Right cardiac atrium (tissue), 5 donors: ENCODE measurements at regions of chr10 and their contacts with region 1.

Region 1: DNA sequence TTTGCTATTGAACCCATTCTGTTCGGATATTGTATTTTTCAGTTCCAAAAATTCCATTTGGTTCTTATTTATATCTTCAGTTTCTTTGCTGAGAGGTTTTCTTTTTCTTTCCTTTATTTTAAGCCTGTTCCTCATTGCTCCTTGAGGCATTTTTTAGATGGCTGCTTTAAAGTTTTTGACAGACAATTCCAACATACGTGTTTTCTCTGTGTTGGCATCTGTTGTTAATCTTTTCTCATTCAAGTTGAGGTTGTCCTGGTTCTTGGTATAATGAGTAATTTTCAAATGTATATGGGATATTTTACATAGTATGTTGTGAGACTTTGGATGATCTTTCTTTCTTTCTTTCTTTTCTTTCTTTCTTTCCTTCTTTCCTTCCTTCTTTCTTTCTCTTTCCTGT is 1078.0 kb upstream of the CELF2 start:
- DNase-seq: no peak
- ATAC-seq: no peak
- H3K4me3 ChIP-seq: no peak overlapping the region
- H3K27ac ChIP-seq: no peak overlapping the region
- H3K4me1 ChIP-seq: no peaks in the 10 kb centered on the region
- H3K27me3 ChIP-seq: no peaks in the 10 kb centered on the region

Region 2: DNA sequence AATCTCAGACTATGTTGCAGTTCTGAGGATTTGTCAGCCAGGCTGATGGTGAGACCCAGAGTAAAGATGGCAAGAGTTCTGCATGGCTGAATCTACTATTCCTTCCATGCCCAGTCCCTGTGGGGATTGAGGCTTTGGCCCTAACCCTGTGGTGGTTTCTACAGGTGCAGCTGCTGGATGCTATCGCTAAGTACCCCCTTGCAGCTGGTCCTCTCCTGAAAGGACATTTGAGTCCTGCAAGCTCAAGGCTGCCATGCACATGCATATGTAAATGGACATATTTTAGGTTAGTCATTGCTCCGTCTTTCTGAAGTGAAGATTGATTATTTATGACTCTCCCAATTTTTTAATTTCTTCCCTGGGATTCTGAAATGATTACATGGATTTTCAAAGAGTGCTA is 44.3 kb before region 1 on chr10:
- intact Hi-C with region 1: no loop called
- DNase-seq: no peak
- ATAC-seq: no peak
- H3K4me3 ChIP-seq: no peak overlapping the region
- H3K27ac ChIP-seq: no peak overlapping the region
- H3K4me1 ChIP-seq: no peaks in the 10 kb centered on the region
- H3K27me3 ChIP-seq: no peaks in the 10 kb centered on the region

Region 3: GRCh38 chr10:9992661-9993060 is 52.9 kb after region 1 on chr10:
- intact Hi-C with region 1: loop called in 1 of 4 experiments (anchors 2 kb)
- DNase-seq: peak in 1 of 3 donors; percentile 50
- ATAC-seq: no peak
- H3K4me3 ChIP-seq: no peak overlapping the region
- H3K27ac ChIP-seq: no peak overlapping the region
- H3K4me1 ChIP-seq: no peaks in the 10 kb centered on the region
- H3K27me3 ChIP-seq: peaks cover 2% of the 10 kb centered on the region

Region 4: GRCh38 chr10:10564081-10564794 is 624.5 kb after region 1 on chr10:
- intact Hi-C with region 1: no loop called
- DNase-seq: no peak
- ATAC-seq: no peak
- H3K4me3 ChIP-seq: no peak overlapping the region
- H3K27ac ChIP-seq: no peak overlapping the region
- H3K4me1 ChIP-seq: no peaks in the 10 kb centered on the region
- H3K27me3 ChIP-seq: no peaks in the 10 kb centered on the region